GM10248 (cell line): ENCODE measurements at regions of chr13 and their contacts with region 1.

Region 1: GRCh38 chr13:70784207-70784989 is 676.1 kb upstream of the KLHL1 start:
- DNase-seq: no peak
- CTCF ChIP-seq: no peak

Region 2: GRCh38 chr13:70769817-70770216 is 14.6 kb before region 1 on chr13:
- CTCF ChIA-PET with region 1: interaction called, 12 read pairs
- POLR2A ChIA-PET with region 1: no interaction called
- DNase-seq: no peak
- CTCF ChIP-seq: no peak

Region 3: DNA sequence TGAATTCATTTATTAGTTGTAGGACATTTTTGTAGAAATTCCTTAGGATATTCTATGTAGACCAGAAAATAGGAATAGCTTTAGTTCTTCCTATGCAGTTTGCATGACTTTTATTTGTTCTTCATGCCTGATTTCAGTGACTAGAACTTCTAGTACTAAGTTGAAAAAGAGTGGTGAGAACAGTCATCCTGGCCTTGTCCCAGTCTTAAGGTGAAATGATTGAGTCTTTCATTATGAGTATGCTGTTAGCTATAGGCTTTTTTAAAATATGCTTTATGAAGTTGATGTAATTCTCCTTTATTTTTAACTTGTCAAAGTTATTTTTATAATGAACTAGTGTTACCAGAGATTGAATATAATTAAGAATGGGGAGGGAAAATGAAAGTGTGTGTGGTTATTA is 14.0 kb after region 1 on chr13:
- CTCF ChIA-PET with region 1: interaction called, 11 read pairs
- POLR2A ChIA-PET with region 1: no interaction called
- DNase-seq: no peak
- CTCF ChIP-seq: no peak